Panc1 (cell line): ENCODE measurements at regions of chr20 and their contacts with region 1.

Region 1: DNA sequence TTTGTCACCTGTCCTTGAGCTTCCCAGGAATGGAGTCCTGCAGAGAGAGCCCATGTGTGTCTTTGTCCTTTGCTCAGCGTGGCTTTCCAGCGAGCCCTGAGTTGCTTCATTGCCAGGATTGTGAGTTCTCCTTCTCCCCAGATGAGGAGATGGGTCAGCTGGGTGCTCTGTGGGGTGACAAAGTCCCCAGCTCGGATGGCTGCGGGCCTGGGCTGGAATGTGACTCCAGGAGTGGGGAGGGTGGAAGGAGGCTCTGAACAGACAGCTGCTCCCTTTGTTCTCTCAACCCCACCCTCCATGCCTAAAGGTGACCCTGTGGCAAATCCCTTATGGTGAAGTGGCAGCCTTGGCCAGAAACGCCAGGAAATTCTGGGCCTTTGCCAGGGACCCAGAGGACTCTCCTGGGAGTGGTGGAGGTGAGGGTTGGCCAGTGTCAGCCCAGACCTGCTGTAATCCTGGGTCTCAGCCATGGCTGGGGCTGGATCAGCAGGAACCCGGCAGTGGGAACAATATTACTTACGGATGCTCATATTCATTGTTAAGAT is 44.4 kb upstream of the CST5 start:
- DNase-seq: no peak
- ATAC-seq: no peak
- H3K4me3 ChIP-seq: no peak overlapping the region
- H3K27ac ChIP-seq: no peak overlapping the region
- H3K4me1 ChIP-seq: no peaks in the 10 kb centered on the region
- H3K27me3 ChIP-seq: no peaks in the 10 kb centered on the region; the same call in 1 of the 2 replicates
- CTCF ChIP-seq: no peak

Region 2: GRCh38 chr20:23910210-23910609 is 13.8 kb before region 1 on chr20:
- CTCF ChIA-PET with region 1: no interaction called
- POLR2A ChIA-PET with region 1: no interaction called
- in situ Hi-C with region 1: no loop called
- intact Hi-C with region 1: no loop called
- DNase-seq: no peak
- ATAC-seq: no peak
- H3K4me3 ChIP-seq: no peak overlapping the region
- H3K27ac ChIP-seq: no peak overlapping the region
- H3K4me1 ChIP-seq: no peaks in the 10 kb centered on the region
- H3K27me3 ChIP-seq: no peaks in the 10 kb centered on the region
- CTCF ChIP-seq: no peak

Region 3: GRCh38 chr20:24158281-24158680 is 234.3 kb after region 1 on chr20:
- CTCF ChIA-PET with region 1: no interaction called
- POLR2A ChIA-PET with region 1: interaction called, 12 read pairs
- in situ Hi-C with region 1: no loop called
- intact Hi-C with region 1: no loop called
- DNase-seq: no peak
- ATAC-seq: no peak
- H3K4me3 ChIP-seq: no peak overlapping the region
- H3K27ac ChIP-seq: no peak overlapping the region
- H3K4me1 ChIP-seq: no peaks in the 10 kb centered on the region
- H3K27me3 ChIP-seq: no peaks in the 10 kb centered on the region
- CTCF ChIP-seq: no peak